MCF 10A (cell line): ENCODE measurements at regions of chr19 and their contacts with region 1.

Region 1: GRCh38 chr19:55189424-55189823 is 9.3 kb upstream of the SYT5 start:
- DNase-seq: peak; percentile 100
- H3K4me3 Mint-ChIP-seq: peak overlapping the region; percentile 64
- H3K27ac Mint-ChIP-seq: peak overlapping the region; percentile 99
- H3K4me1 Mint-ChIP-seq: peaks cover 14% of the 10 kb centered on the region
- H3K27me3 Mint-ChIP-seq: no peaks in the 10 kb centered on the region
- CTCF ChIP-seq: no peak

Region 2: GRCh38 chr19:55166530-55167268 is 22.7 kb before region 1 on chr19 and contains the start of gene DNAAF3:
- CTCF ChIA-PET with region 1: interaction called, 3 read pairs
- POLR2A ChIA-PET with region 1: interaction called, 21 read pairs
- intact Hi-C with region 1: loop called (anchors 2 kb)
- DNase-seq: peak; percentile 100
- H3K4me3 Mint-ChIP-seq: peak within 1 kb of the TSS; percentile 84
- H3K27ac Mint-ChIP-seq: peak within 1 kb of the TSS; percentile 93
- H3K4me1 Mint-ChIP-seq: peaks cover 10% of the 10 kb centered on the region
- H3K27me3 Mint-ChIP-seq: no peaks in the 10 kb centered on the region
- CTCF ChIP-seq: no peak
- total RNA-seq, gene DNAAF3: 3.9 and 4.9 TPM in 2 replicates

Region 3: DNA sequence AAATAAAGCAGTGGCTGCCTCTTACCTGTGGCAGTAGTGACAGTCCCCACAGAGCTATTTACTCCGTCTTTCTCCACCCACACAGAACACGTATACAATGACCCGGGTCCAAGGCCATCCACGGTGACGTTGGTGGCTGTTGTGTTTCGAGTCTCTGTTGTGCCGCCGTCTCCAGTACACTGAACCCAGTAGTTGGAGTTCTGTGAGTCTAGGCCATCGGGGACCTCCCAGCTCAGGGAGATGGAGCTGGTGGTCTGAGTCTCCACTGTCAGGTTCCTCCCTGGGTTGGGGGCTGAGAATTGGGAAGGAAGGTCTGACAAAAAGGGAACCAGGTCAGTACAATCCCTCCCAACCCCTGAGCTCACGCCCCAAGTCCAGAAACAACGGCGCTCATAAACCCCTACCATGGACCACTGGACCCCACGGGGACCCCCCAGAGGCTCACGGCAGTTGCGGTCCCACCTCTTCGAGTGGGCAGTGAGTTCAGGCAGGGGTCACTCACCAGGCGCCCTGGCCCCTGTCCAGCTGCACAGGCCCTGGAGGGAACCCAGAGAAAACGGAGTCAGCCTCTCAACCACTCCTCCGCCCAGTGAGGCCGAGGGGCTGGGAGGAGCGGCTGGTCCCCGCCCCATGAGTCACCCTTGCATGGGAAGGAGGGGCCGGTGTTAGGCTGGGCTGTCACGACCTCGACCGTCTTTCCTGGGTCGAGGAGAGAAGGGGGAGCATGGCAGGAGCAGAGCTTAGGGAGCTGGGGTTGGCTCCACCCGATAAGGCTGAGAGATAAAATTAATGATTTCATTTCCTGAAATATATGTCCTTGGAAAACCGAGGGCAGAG is 17.5 kb after region 1 on chr19:
- CTCF ChIA-PET with region 1: interaction called, 3 read pairs
- POLR2A ChIA-PET with region 1: interaction called, 8 read pairs
- intact Hi-C with region 1: loop called (anchors 2 kb)
- DNase-seq: peak; percentile 93
- H3K4me3 Mint-ChIP-seq: peak overlapping the region; percentile 66
- H3K27ac Mint-ChIP-seq: peak overlapping the region; percentile 91
- H3K4me1 Mint-ChIP-seq: peaks cover 21% of the 10 kb centered on the region
- H3K27me3 Mint-ChIP-seq: no peaks in the 10 kb centered on the region
- CTCF ChIP-seq: no peak

Region 4: DNA sequence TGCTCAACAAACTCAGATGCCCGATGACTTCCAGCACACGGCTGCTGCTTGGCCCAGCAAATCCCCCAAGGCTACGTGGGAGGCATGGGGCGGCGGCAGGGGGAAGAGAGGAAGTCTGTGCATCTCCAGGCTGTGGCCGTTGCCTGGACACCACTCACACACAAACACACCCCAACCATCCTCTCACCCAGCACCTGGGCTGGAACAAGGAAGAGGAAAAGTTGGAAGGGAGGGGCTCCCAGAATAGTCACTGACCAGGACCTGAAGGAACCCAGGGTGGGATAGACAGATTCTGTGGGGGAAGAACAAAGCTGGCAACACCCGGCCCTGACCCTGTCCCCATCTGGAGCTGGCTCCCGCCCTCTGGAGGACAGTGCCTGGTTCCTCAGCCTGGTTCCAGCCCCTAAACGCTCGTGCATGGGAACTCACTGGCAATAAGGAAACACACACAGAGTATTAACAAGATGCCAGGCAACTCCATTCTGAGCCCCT is 58.2 kb after region 1 on chr19:
- CTCF ChIA-PET with region 1: no interaction called
- POLR2A ChIA-PET with region 1: no interaction called
- intact Hi-C with region 1: no loop called
- DNase-seq: no peak
- H3K4me3 Mint-ChIP-seq: no peak overlapping the region
- H3K27ac Mint-ChIP-seq: no peak overlapping the region
- H3K4me1 Mint-ChIP-seq: peaks cover 11% of the 10 kb centered on the region
- H3K27me3 Mint-ChIP-seq: no peaks in the 10 kb centered on the region
- CTCF ChIP-seq: no peak